Dendritic cell treated with granulocyte-macrophage colony-stimulating factor and Interleukin-4, amounts not matched to agents 40 ng/mL and 50 ng/mL, for 4 days (primary cell): ENCODE measurements at regions of chr19 and their contacts with region 1.

Region 1: GRCh38 chr19:48415395-48415794 is 21.9 kb downstream of the GRIN2D start:
- H3K4me3 Mint-ChIP-seq: peak overlapping the region; percentile 75
- H3K27ac Mint-ChIP-seq: peak overlapping the region; percentile 70
- H3K4me1 Mint-ChIP-seq: peaks cover 49% of the 10 kb centered on the region
- H3K27me3 Mint-ChIP-seq: peaks cover 36% of the 10 kb centered on the region

Region 2: GRCh38 chr19:48363810-48364563 is 51.4 kb before region 1 on chr19 and contains the starts of genes SYNGR4 and TMEM143:
- intact Hi-C with region 1: loop called (anchors 1 kb)
- H3K4me3 Mint-ChIP-seq: peak within 1 kb of the TSS; percentile 78
- H3K27ac Mint-ChIP-seq: peak within 1 kb of the TSS; percentile 95
- H3K4me1 Mint-ChIP-seq: peaks cover 18% of the 10 kb centered on the region
- H3K27me3 Mint-ChIP-seq: no peaks in the 10 kb centered on the region

Region 3: GRCh38 chr19:48400018-48400742 is 15.2 kb before region 1 on chr19:
- intact Hi-C with region 1: loop called (anchors 2 kb)
- H3K4me3 Mint-ChIP-seq: no peak overlapping the region
- H3K27ac Mint-ChIP-seq: peak overlapping the region; percentile 80
- H3K4me1 Mint-ChIP-seq: peaks cover 54% of the 10 kb centered on the region
- H3K27me3 Mint-ChIP-seq: peaks cover 31% of the 10 kb centered on the region

Region 4: DNA sequence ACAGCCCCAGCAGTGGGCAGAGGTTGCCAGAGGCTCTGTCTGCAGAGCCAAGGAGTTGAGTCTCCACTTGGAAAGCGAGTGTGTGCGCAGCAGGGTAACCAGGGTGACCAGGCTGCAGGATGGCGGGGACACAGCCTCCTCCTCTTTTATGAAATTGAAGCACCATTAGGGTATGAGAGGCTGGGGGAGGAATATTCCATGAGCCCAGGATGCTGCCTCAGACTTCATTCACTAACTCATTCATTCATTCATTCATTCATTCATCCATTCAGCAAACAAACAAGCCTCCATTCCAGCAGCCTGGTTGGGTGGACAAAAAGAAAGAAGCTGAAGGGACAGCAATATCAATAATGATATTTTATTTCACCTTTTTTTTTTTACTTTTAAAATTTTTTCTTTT is 102.8 kb after region 1 on chr19:
- intact Hi-C with region 1: no loop called
- H3K4me3 Mint-ChIP-seq: no peak overlapping the region
- H3K27ac Mint-ChIP-seq: no peak overlapping the region
- H3K4me1 Mint-ChIP-seq: peaks cover 6% of the 10 kb centered on the region
- H3K27me3 Mint-ChIP-seq: peaks cover 13% of the 10 kb centered on the region